Cardiac septum (tissue), 1 donor: ENCODE measurements at regions of chr19 and their contacts with region 1.

Region 1: DNA sequence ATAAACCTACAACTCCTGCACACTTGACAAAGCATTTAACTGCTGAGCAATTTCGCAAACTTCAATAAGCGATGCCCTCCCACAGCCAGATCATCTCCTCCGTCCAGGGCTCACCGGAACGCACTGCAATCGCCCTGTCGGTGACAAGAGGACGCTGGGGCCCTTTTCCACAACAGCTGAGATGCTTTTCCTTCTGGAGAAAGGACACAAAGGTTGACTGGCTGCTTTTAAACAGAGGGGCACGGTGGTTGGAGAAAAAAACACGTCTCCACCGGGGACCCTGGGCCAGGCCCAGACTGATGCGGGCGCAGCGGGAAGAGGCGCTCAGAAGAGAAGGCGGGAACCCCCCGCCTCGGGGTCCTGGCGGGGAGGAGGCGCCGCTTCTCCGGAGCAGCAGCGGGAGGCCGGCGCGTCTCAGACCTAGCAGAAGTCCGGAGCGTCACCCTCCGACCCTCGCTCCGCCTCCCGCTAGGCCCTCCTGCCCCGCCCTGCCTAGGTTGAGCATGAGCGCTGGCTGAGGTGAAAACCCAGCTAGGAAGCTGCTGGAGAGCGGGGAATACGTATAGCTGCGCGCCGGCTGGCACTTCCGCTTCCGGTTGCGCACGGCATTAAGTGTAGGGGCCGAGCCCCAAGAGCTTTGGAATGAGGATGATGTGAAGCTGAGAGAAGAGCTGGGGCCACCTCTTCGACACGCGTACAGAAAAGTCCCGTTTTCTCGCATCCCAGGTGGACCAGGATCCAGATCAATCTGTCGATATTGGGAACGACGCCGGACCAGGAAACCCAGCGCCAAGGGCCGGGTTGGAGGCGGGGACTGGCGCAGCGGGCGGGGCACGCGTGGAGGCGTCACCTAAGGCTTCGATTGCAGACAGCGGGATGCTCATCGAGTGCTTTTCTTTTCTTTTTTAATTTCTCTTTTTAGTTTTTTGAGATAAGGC is at the start of gene ZNF846:
- DNase-seq: peak; percentile 97
- total RNA-seq, gene ZNF846: 10.5 TPM

Region 2: DNA sequence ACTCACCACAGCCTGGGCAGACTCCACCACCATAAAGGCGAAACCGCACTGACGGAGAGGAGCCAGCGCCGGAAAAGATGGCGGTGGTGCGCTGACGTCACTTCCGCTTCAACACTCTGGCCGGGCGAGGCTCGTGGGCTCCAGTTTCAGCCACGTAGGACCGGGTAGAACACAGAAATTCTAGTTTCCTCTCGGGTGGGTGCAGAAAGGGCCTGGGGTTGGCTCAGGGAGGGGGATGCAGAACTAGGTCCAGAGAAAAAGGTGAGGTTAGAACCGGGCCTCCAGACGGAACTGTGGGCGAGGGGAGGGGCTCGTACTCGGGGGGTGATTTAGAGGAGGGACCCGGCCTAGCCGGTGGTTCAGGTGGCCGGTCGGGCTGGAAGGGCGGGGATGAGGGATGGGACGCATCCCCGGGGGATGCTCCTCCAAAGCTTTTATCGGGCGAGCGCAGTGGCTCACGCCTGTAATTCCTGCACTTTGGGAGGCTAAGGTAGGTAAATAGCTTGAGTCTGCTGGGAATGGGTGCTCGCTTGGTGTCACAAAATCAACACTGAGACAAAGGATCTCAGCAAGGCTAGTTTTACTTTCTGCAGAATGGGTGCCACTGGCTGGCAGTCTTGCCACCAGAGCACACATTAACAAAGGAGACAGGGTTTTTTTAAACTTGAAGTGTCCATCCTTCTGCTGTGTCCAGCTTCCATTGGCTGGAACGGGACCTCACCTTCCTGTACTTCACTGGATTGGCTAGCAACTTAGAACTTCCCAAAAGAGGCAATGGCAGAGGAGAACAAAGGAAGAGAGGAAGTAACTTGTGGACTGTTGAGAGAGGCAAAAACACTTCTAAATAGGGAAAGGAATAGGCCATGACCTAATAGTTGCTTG is 147.0 kb before region 1 on chr19 and contains the start of gene ZNF561:
- intact Hi-C with region 1: loop called (anchors 2 kb)
- DNase-seq: peak; percentile 94
- total RNA-seq, gene ZNF561: 27.4 TPM

Region 3: GRCh38 chr19:9674663-9675357 is 93.6 kb before region 1 on chr19 and contains the start of gene ZNF562:
- intact Hi-C with region 1: loop called (anchors 2 kb)
- DNase-seq: peak; percentile 96
- total RNA-seq, gene ZNF562: 21.9 TPM